Transverse colon (tissue), 4 donors: ENCODE measurements at regions of chr17 and their contacts with region 1.

Region 1: DNA sequence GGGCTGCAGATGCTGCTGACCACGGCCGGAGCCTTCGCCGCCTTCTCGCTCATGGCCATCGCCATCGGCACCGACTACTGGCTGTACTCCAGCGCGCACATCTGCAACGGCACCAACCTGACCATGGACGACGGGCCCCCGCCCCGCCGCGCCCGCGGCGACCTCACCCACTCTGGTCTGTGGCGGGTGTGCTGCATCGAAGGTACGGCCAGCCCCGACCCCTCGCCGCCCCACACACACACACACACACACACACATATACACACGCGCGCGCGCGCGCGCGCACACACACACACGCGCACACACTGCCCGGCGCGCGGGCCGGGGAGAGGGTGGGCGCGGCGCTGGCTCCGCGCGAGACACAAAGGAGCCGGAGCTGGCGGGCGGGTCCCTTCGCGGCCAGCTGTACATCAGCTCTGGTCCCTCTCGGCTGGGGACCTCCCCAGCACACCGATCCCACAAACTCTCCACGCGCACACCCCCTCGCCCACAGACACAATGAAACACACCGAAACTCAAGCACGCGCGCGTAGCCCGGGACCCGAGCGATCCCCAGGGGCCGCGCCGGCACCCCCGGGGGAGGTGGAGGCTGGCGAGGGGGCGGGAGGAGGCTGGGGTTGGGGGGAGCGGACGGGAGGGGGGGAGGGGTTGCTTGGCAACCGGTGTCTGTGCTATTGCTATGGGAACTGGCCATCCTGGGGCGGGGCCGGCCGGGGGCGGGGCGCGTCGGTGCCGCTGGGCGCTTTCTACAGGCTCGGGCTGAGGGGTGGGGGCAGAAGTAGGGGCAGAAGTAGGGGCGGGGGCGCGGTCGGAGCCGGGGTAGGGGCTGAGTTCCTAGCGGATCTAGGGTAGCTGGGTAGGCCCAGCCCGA is 658 bp downstream of the CACNG4 start:
- DNase-seq: no peak
- H3K4me3 ChIP-seq: peak overlapping the region in 3 of 4 donors; percentile 16 to 48 (median 33)
- H3K27ac ChIP-seq: no peak overlapping the region
- H3K4me1 ChIP-seq: peaks cover 9 to 24% (median 19%) of the 10 kb centered on the region in 4 donors
- H3K27me3 ChIP-seq: peaks cover 94% of the 10 kb centered on the region
- CTCF ChIP-seq: no peak
- EP300 ChIP-seq: no peak
- POLR2A ChIP-seq: no peak

Region 2: DNA sequence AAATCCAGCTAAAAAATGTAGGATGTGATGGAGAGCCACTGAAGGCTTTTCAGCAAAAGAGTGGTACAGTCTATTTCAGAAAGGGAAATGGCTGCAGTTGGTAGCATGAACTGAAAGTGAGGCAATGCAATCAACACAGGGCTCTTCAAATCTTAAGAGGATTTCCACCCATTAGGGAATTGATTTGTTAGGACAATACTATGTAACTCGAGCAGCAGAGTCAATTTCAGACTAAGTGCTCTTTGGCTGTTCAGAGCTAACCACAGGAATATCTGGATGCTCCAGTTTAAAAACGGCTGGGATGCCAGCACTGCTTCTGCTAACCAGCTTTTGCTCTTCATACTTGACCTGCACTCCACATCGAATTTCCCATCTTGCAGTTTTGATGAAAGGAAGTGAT is 103.8 kb after region 1 on chr17:
- in situ Hi-C with region 1: no loop called
- intact Hi-C with region 1: no loop called
- DNase-seq: no peak
- H3K4me3 ChIP-seq: no peak overlapping the region
- H3K27ac ChIP-seq: no peak overlapping the region
- H3K4me1 ChIP-seq: peaks cover 0 to 5% (median 0%) of the 10 kb centered on the region in 4 donors
- H3K27me3 ChIP-seq: no peaks in the 10 kb centered on the region
- CTCF ChIP-seq: no peak
- EP300 ChIP-seq: no peak
- POLR2A ChIP-seq: no peak

Region 3: GRCh38 chr17:67995570-67996263 is 1030.6 kb after region 1 on chr17:
- in situ Hi-C with region 1: no loop called
- intact Hi-C with region 1: loop called (anchors 5 kb)
- DNase-seq: peak; percentile 19
- H3K4me3 ChIP-seq: peak overlapping the region; percentile 33 to 63 (median 44)
- H3K27ac ChIP-seq: peak overlapping the region; percentile 14 to 99 (median 66)
- H3K4me1 ChIP-seq: peaks cover 9 to 28% (median 18%) of the 10 kb centered on the region in 4 donors
- H3K27me3 ChIP-seq: peaks cover 6% of the 10 kb centered on the region
- CTCF ChIP-seq: no peak
- EP300 ChIP-seq: no peak
- POLR2A ChIP-seq: no peak